ENCODE measurements at regions of chr2 and their contacts with region 1.

Region 1: DNA sequence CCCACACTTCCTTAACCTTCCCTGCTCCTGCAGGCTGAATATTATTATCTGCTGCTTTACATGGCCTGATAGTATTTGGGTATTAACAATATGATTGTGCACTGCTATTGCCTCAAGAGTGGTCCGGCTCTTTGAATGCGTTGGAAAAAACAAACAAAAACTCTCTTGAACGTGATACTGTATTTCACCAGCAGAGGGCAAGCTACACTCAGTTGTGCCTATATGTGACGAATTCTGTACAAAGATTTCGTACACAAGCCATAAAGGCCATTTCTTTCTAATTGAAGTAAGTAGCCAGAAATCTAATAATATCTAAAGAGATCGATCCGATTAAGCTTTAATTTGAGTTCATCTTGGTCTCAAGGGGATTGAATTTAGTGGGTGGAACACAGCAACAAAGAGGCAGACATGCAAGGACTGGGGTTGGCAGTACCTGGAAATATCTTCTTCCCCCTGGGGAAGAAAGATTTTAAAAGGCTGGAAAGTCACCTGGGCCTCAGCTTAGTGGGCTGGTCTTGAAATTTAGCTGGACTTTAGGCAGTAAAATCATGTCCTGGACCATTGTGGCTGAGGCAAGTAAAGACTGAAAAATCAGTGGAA is 49.3 kb upstream of the RAB6D start:
- DNase-seq: peak; percentile 63
- ATAC-seq: peak; percentile 95
- H3K4me3 ChIP-seq: no peak overlapping the region
- H3K27ac ChIP-seq: no peak overlapping the region
- H3K4me1 ChIP-seq: no peaks in the 10 kb centered on the region
- H3K27me3 ChIP-seq: peaks cover 26% of the 10 kb centered on the region
- CTCF ChIP-seq: peak; percentile 80
- POLR2A ChIP-seq: no peak
- RAD21 ChIP-seq: peak; percentile 83

Region 2: GRCh38 chr2:130864830-130865800 is 548.1 kb before region 1 on chr2:
- CTCF ChIA-PET with region 1: no interaction called
- POLR2A ChIA-PET with region 1: no interaction called
- dilution Hi-C with region 1: no loop called
- in situ Hi-C with region 1: no loop called
- intact Hi-C with region 1: no loop called
- DNase-seq: peak; percentile 78
- ATAC-seq: peak; percentile 24; the same call in 1 of the 2 replicates
- H3K4me3 ChIP-seq: no peak overlapping the region
- H3K27ac ChIP-seq: no peak overlapping the region
- H3K4me1 ChIP-seq: no peaks in the 10 kb centered on the region; the same call in 1 of the 2 replicates
- H3K27me3 ChIP-seq: peaks cover 3% of the 10 kb centered on the region; the same call in 1 of the 2 replicates
- CTCF ChIP-seq: no peak
- POLR2A ChIP-seq: no peak
- RAD21 ChIP-seq: no peak

Region 3: DNA sequence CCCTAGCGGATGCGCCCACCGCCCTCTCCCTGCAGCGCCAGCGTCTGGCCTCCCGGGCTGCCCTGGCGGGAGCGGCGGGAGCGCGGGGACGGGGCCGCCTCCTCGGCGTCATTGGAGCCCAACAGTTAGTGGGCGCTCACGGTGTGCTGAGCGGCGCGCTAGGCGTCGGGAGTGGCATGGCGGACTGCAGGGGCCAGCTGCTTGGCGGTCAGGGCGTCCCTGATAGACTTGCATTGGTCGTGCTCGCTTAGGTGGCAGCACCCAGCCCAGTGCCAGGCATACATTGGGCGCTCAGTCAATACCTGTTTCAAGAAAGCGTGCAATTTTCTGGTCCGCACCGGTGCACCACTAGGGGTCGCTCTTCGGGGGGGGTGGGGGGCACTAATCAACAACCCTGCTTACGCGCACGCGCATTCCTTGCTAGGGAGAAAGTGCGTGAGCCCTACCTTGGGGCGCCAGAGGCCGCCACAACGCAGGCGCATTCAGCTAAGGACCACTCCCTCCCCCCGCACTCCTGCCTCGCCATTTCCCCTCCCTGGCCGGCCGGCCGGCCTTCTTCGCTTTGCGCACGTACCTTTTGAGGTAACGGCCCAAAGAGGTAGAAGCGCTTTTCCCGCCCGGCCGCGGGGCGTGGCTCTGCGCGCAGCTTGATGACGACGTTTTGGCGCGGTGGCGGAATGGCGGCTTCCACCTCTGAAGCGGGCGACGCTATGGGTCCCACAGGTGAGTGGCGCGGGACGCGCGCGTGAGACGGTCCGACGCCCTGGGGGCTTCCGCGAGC is 79.4 kb after region 1 on chr2:
- CTCF ChIA-PET with region 1: interaction called, 4 read pairs
- POLR2A ChIA-PET with region 1: no interaction called
- dilution Hi-C with region 1: no loop called
- in situ Hi-C with region 1: no loop called
- intact Hi-C with region 1: loop called (anchors 1 kb)
- DNase-seq: peak; percentile 90
- ATAC-seq: peak; percentile 82
- H3K4me3 ChIP-seq: peak overlapping the region; percentile 76
- H3K27ac ChIP-seq: peak overlapping the region; percentile 74
- H3K4me1 ChIP-seq: 0 out of 2 replicates have a peak, but pooled peaks cover 2% of the 10 kb centered on the region
- H3K27me3 ChIP-seq: no peaks in the 10 kb centered on the region
- CTCF ChIP-seq: peak; percentile 66
- POLR2A ChIP-seq: no peak
- RAD21 ChIP-seq: no peak

Region 4: GRCh38 chr2:131673392-131674173 is 260.3 kb after region 1 on chr2:
- CTCF ChIA-PET with region 1: interaction called, 19 read pairs
- POLR2A ChIA-PET with region 1: no interaction called
- dilution Hi-C with region 1: no loop called
- in situ Hi-C with region 1: loop called (anchors 10 kb)
- intact Hi-C with region 1: loop called (anchors 1 kb)
- DNase-seq: peak; percentile 44
- ATAC-seq: peak; percentile 93
- H3K4me3 ChIP-seq: no peak overlapping the region; the same call in 1 of the 2 replicates
- H3K27ac ChIP-seq: no peak overlapping the region
- H3K4me1 ChIP-seq: peaks cover 11% of the 10 kb centered on the region
- H3K27me3 ChIP-seq: no peaks in the 10 kb centered on the region; the same call in 1 of the 2 replicates
- CTCF ChIP-seq: peak; percentile 81
- POLR2A ChIP-seq: no peak
- RAD21 ChIP-seq: peak; percentile 81

Measured in IMR-90 (cell line).